ENCODE measurements at regions of chr7 and their contacts with region 1.

Region 1: DNA sequence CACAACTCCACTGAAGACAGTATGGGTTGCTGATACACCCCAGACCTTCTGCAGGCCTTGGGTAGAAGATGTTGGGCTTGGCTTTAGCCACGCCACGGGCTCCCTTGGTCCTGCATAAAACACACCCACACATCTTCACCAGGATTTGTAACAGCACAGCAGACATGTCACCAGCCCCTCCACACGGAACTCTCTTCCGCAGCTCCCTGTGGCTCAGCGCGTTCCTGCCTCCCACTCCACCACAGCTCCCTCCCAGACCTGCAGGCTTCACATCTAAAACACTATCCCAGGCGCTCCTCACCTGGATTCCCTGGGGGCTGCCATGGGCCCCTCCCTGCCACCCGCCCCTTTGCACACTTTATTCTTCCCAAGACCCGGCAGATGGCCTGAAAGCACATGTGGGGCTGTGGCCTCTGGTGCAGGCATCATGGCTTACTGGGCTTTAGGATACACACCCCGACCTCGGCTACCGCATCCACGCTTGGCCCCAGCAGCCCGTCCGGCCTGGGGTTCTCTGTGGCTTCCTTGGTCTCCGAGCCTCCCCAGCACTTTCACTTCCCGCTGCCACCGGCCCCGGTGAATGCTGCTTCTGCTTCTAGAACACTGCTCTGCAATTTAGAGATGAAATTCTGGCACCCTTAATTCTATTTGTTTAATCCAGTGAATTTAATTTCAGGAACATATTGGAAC is 432.9 kb downstream of the DNAJB6 start:
- DNase-seq: peak in 2 of 6 donors; percentile 36 to 49
- ATAC-seq: peak in 1 of 4 donors; percentile 23
- H3K4me3 ChIP-seq: no peak overlapping the region
- H3K27ac ChIP-seq: no peak overlapping the region
- H3K4me1 ChIP-seq: no peaks in the 10 kb centered on the region
- H3K27me3 ChIP-seq: no peaks in the 10 kb centered on the region
- CTCF ChIP-seq: no peak

Region 2: DNA sequence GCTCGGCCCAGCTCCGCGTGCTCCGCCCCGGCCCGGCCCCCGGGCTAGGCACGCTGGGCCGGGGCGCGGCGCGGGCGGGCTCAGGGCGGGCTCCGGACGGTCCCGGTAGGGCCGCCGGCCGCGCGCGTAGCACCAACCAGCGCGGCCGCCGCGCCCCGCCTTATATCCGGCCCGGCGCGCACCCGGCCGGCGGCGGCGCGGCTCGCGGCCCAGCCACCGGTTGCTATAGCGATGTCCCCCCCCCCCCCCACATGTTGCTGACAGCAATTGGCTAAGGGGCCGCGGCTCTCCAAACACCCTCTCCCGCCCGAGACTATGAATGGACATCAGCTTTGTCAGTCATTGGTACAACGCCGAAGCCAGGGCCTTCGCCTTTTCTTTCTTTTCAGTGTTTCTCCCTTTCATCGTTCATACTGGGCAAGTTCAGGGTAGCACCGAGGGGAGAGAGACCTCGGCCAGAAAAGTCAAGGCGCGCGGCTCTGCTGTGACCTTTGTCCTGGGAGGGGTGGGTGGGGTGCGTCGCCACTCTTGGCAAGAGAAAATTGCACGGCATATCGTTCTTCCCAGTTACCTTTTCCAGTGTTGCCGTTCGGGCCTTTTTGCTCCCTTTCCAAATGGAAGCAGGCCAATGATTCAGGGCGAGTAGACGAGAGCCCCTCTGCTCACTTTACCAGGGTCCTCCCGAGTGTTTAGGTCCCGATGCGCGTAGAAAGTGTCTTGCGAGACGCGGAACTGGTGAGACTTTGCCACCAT is 78.7 kb before region 1 on chr7:
- intact Hi-C with region 1: no loop called
- DNase-seq: peak in 2 of 6 donors; percentile 21 to 50
- ATAC-seq: peak; percentile 28 to 80 (median 70)
- H3K4me3 ChIP-seq: peak overlapping the region in 2 of 4 donors; percentile 14 to 39
- H3K27ac ChIP-seq: no peak overlapping the region
- H3K4me1 ChIP-seq: no peaks in the 10 kb centered on the region
- H3K27me3 ChIP-seq: peaks cover 0 to 8% (median 4%) of the 10 kb centered on the region in 4 donors
- CTCF ChIP-seq: no peak

Region 3: GRCh38 chr7:157709531-157710251 is 60.0 kb before region 1 on chr7:
- intact Hi-C with region 1: loop called in 1 of 3 experiments (anchors 10 kb)
- DNase-seq: peak in 2 of 6 donors; percentile 38 to 46
- ATAC-seq: no peak
- H3K4me3 ChIP-seq: no peak overlapping the region
- H3K27ac ChIP-seq: no peak overlapping the region
- H3K4me1 ChIP-seq: no peaks in the 10 kb centered on the region
- H3K27me3 ChIP-seq: no peaks in the 10 kb centered on the region
- CTCF ChIP-seq: no peak

Region 4: DNA sequence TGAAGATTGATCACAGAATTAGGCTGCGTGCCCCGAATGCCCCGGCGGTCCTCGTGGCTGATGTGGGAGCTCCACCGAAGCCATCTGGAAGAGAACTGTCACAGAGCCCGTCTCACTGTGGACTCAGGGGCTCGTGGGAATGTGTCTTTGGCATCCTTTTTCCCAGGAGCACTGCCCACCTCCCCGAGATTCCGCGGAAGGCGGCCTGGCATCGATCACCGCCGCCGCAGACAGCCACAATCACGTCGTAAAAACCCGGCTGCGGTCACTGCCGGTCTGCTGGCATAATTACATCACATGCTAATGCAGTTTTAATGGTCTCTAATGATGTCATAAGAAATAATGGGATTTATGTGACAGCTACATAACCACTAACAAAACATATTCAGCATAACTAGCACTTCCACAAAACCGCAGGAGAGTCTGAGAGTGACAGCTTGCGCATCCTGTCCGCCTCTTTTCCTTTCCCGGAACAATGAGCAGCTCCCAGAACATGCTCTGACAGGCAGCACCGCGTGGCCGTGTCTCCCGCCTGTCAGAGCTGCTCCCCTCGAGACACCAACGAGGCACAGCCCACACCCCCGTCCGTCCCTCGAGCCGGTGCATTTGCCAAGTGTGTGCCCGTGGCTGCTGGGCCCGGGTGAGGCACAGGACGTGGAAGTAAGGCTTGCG is 327.9 kb after region 1 on chr7:
- intact Hi-C with region 1: no loop called
- DNase-seq: no peak
- ATAC-seq: no peak
- H3K4me3 ChIP-seq: no peak overlapping the region
- H3K27ac ChIP-seq: no peak overlapping the region
- H3K4me1 ChIP-seq: no peaks in the 10 kb centered on the region
- H3K27me3 ChIP-seq: no peaks in the 10 kb centered on the region
- CTCF ChIP-seq: no peak